CD8-positive, alpha-beta memory T cell (primary cell): ENCODE measurements at regions of chr15 and their contacts with region 1.

Region 1: GRCh38 chr15:45587095-45587860 is at the start of gene BLOC1S6:
- DNase-seq: peak; percentile 82 to 92 (median 88)
- H3K4me3 ChIP-seq: peak within 1 kb of the TSS; percentile 95
- H3K4me3 Mint-ChIP-seq: peak within 1 kb of the TSS; percentile 97 to 100 (median 99)
- H3K27ac ChIP-seq: peak within 1 kb of the TSS; percentile 99
- H3K27ac Mint-ChIP-seq: peak within 1 kb of the TSS; percentile 97 to 100 (median 100)
- H3K4me1 ChIP-seq: peaks cover 34% of the 10 kb centered on the region
- H3K4me1 Mint-ChIP-seq: peaks cover 36 to 56% (median 53%) of the 10 kb centered on the region in 3 donors
- H3K27me3 ChIP-seq: no peaks in the 10 kb centered on the region
- H3K27me3 Mint-ChIP-seq: no peaks in the 10 kb centered on the region
- total RNA-seq, gene BLOC1S6: 50.9 to 56.7 TPM

Region 2: GRCh38 chr15:45555934-45556608 is 31.2 kb before region 1 on chr15:
- CTCF ChIA-PET with region 1: no interaction called
- POLR2A ChIA-PET with region 1: no interaction called
- DNase-seq: no peak
- H3K4me3 ChIP-seq: no peak overlapping the region
- H3K4me3 Mint-ChIP-seq: no peak overlapping the region
- H3K27ac ChIP-seq: no peak overlapping the region
- H3K27ac Mint-ChIP-seq: no peak overlapping the region
- H3K4me1 ChIP-seq: no peaks in the 10 kb centered on the region
- H3K4me1 Mint-ChIP-seq: no peaks in the 10 kb centered on the region
- H3K27me3 ChIP-seq: no peaks in the 10 kb centered on the region
- H3K27me3 Mint-ChIP-seq: peaks cover 9 to 58% of the 10 kb centered on the region in 2 donors

Region 3: GRCh38 chr15:45573961-45574629 is 13.2 kb before region 1 on chr15:
- CTCF ChIA-PET with region 1: interaction called, 3 read pairs
- POLR2A ChIA-PET with region 1: interaction called, 10 read pairs
- DNase-seq: no peak
- H3K4me3 ChIP-seq: no peak overlapping the region
- H3K4me3 Mint-ChIP-seq: no peak overlapping the region
- H3K27ac ChIP-seq: no peak overlapping the region
- H3K27ac Mint-ChIP-seq: no peak overlapping the region
- H3K4me1 ChIP-seq: no peaks in the 10 kb centered on the region
- H3K4me1 Mint-ChIP-seq: no peaks in the 10 kb centered on the region
- H3K27me3 ChIP-seq: peaks cover 4% of the 10 kb centered on the region
- H3K27me3 Mint-ChIP-seq: peaks cover 18 to 44% of the 10 kb centered on the region in 2 donors

Region 4: GRCh38 chr15:45611305-45611704 is 24.0 kb after region 1 on chr15:
- CTCF ChIA-PET with region 1: interaction called, 27 read pairs
- POLR2A ChIA-PET with region 1: no interaction called
- DNase-seq: peak in 1 of 5 donors; percentile 7
- H3K4me3 ChIP-seq: no peak overlapping the region
- H3K4me3 Mint-ChIP-seq: no peak overlapping the region
- H3K27ac ChIP-seq: no peak overlapping the region
- H3K27ac Mint-ChIP-seq: no peak overlapping the region
- H3K4me1 ChIP-seq: no peaks in the 10 kb centered on the region
- H3K4me1 Mint-ChIP-seq: peaks cover 0 to 3% (median 0%) of the 10 kb centered on the region in 3 donors
- H3K27me3 ChIP-seq: no peaks in the 10 kb centered on the region
- H3K27me3 Mint-ChIP-seq: no peaks in the 10 kb centered on the region